Activated T-helper 2 cell treated with anti-CD3 and anti-CD28 coated beads, Interferon-gamma antibody, Interleukin-2, Interleukin-4, amounts not matched to agents 10 μg/mL and 5 μg/mL and 100 μg/mL, durations not matched to agents 14 hours and 24 hours and 36 hours (primary cell): ENCODE measurements at regions of chr11 and their contacts with region 1.

Region 1: GRCh38 chr11:41461057-41461681 is 1.7 kb upstream of the LRRC4C start:
- DNase-seq: no peak
- H3K4me3 Mint-ChIP-seq: no peak overlapping the region
- H3K27ac Mint-ChIP-seq: no peak overlapping the region
- H3K4me1 Mint-ChIP-seq: no peaks in the 10 kb centered on the region
- H3K27me3 Mint-ChIP-seq: no peaks in the 10 kb centered on the region

Region 2: GRCh38 chr11:42524534-42525227 is 1063.5 kb after region 1 on chr11:
- intact Hi-C with region 1: loop called (anchors 10 kb)
- DNase-seq: no peak
- H3K4me3 Mint-ChIP-seq: no peak overlapping the region
- H3K27ac Mint-ChIP-seq: no peak overlapping the region
- H3K4me1 Mint-ChIP-seq: no peaks in the 10 kb centered on the region
- H3K27me3 Mint-ChIP-seq: no peaks in the 10 kb centered on the region

Region 3: DNA sequence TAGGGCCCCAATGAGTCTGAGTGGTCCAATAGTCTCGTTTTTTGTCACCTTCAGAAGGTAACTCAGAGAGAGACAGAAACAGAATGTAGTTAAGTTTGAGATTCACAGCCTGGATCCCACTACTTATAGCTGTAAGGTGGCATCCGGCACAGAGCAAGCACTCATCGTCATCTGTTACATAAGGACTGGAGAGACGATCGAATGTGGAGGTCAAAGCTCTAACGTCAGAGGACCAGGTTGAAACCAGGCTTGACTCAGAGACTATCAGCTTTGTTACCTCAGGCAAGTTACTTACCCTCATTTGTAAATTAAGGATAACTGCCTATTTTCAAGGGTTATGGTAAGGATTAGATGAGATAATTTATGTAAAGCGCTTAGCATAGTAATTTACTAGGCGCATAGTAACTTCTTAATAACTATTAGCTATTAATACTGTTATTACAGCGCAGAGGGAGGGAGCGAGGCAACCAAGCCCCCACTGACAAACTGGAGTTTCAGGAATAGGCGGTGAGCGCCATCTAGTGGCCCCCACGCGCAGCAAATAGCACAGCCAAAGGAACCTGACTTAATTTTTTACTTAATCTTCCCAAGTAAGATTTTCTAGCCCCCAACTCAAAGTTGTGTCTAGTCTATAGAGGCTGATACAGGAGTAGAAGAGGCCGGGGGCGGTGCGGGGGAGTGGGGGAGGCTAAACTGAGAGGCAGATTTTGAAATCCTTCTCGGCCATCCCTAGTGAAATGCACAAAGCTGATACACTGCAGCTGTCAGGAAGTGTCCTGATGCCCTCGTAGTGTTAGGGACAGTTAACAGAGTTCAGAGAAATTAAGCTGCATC is 1821.7 kb after region 1 on chr11:
- intact Hi-C with region 1: loop called (anchors 5 kb)
- DNase-seq: no peak
- H3K4me3 Mint-ChIP-seq: no peak overlapping the region
- H3K27ac Mint-ChIP-seq: no peak overlapping the region
- H3K4me1 Mint-ChIP-seq: no peaks in the 10 kb centered on the region
- H3K27me3 Mint-ChIP-seq: peaks cover 2% of the 10 kb centered on the region